ENCODE measurements at regions of chr11 and their contacts with region 1.

Region 1: DNA sequence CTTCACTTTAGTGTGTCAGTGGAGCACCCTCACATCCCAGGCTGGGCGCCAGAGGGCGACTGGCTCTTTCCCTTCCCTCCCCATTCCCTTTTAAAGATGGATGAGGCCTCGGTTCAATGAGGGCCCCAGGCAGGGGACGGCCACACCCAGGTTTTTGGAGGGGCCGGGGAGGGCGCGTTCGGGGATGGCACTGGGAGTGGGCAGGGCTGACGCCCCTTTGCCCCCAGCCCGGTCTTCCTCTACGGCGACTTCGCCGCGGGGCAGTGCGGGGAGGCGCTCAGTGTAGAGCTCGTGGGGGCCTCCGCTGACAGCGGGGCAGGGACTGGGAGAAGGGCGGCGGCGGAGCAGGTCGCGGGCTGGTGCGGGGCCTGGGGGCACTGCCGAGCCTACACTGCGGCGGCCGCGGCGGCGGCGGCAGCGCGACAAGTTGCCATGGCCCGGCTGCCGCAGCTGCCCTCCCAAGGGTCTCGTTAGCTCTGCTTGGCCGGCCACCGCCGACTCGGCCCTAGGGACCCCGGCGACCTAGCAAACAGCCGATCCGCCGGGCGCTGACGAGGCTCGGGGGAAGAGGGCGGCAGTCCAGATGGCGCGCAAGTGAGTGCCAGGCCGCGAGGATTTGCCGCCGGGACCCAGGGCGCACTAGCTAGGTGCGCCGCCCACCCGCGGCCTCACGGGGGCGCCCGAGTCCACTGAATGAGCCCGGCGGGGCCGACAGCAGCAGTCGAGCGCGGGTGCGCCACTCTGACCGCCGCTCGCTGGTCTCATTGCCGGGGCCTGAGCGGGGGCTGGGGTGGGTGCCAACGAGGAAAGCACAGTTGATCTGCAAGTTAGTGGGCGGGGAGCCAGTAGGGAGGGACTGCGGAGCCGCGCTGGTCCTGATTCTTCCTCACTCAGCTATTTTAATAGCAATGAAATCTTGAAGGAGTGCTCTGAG is 92.7 kb downstream of the RRM1 start:
- DNase-seq: peak; percentile 89
- H3K4me3 Mint-ChIP-seq: peak overlapping the region; percentile 77
- H3K27ac Mint-ChIP-seq: no peak overlapping the region
- H3K4me1 Mint-ChIP-seq: peaks cover 26% of the 10 kb centered on the region
- H3K27me3 Mint-ChIP-seq: peaks cover 6% of the 10 kb centered on the region

Region 2: DNA sequence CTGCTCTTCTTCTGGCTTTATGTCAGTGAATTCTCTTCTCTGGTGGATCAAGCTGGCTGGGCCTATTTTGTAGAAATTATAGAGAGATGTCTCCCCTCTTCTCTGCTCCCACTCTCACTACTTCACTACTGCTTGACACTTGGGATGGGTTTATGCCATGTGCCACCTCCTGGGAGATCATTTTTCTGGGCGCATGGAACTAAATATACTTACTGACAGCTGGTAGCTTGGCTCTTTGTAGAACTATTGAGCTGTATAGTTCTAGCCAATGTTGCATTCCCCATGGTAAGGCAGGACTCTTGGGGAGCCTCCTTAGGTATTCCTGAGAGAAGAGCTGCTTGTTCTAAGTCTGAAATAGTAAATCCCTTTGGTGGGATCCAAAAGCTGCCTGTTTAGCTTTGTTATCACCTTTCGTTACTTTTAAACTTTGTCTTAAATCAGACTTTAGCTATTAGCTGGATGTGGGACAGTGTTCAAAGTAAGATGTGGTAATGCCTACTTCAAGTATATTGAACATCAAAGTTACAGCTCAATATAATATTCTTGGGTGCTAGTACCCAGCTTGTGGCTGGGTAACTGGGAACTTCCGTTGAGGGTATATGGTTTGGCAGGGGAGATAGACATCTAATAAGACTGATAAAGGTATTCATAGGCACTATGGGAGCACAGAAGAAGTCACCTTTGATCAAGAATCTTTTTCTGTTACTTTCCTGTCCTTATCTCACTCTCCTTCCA is 180.2 kb before region 1 on chr11:
- CTCF ChIA-PET with region 1: no interaction called
- POLR2A ChIA-PET with region 1: no interaction called
- DNase-seq: no peak
- H3K4me3 Mint-ChIP-seq: no peak overlapping the region
- H3K27ac Mint-ChIP-seq: no peak overlapping the region
- H3K4me1 Mint-ChIP-seq: peaks cover 12% of the 10 kb centered on the region
- H3K27me3 Mint-ChIP-seq: no peaks in the 10 kb centered on the region

Region 3: GRCh38 chr11:4049006-4049405 is 138.3 kb before region 1 on chr11:
- CTCF ChIA-PET with region 1: no interaction called
- POLR2A ChIA-PET with region 1: no interaction called
- DNase-seq: no peak
- H3K4me3 Mint-ChIP-seq: no peak overlapping the region
- H3K27ac Mint-ChIP-seq: no peak overlapping the region
- H3K4me1 Mint-ChIP-seq: peaks cover 4% of the 10 kb centered on the region
- H3K27me3 Mint-ChIP-seq: no peaks in the 10 kb centered on the region

Region 4: GRCh38 chr11:4087551-4087950 is 99.8 kb before region 1 on chr11:
- CTCF ChIA-PET with region 1: no interaction called
- POLR2A ChIA-PET with region 1: no interaction called
- DNase-seq: no peak
- H3K4me3 Mint-ChIP-seq: no peak overlapping the region
- H3K27ac Mint-ChIP-seq: peak overlapping the region; percentile 64
- H3K4me1 Mint-ChIP-seq: peaks cover 64% of the 10 kb centered on the region
- H3K27me3 Mint-ChIP-seq: no peaks in the 10 kb centered on the region

Region 5: DNA sequence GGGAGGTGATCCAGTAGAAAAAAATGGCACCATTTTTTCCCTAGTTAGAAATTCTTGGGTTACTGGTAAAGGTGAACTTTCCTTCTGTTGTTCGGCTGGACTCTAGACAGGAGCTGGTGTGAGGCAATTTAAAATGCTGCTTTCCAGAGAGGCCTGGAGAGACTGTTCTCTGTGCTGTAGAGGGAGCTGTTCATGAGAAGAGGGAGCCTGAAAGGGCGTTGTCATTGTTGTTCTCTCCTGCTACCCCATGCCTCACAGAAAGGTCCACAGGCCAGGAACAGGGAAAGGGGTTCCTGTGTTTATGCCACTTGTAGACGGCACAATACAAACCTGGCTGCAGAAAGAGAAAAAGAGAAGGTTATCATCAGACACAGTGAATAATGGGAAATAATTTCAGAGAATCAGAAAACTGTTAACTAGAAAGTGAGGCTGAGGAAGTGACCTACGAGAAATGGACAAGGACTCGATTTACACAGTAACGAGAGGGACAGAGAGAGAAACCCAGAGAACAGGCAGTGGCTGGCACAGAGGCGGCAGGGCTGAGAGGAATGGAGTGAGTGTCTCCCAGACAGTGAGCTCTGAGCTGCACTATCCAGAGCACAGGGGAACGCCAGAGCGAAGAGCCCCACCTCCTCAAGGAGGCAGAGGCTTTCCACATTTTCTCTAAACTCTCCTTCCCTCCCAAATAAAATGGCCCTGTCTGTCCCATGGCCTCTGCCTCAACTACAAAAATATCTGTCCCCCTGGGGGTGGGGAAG is 16.5 kb after region 1 on chr11:
- CTCF ChIA-PET with region 1: interaction called, 19 read pairs
- POLR2A ChIA-PET with region 1: no interaction called
- DNase-seq: no peak
- H3K4me3 Mint-ChIP-seq: no peak overlapping the region
- H3K27ac Mint-ChIP-seq: no peak overlapping the region
- H3K4me1 Mint-ChIP-seq: no peaks in the 10 kb centered on the region
- H3K27me3 Mint-ChIP-seq: peaks cover 16% of the 10 kb centered on the region

Region 6: DNA sequence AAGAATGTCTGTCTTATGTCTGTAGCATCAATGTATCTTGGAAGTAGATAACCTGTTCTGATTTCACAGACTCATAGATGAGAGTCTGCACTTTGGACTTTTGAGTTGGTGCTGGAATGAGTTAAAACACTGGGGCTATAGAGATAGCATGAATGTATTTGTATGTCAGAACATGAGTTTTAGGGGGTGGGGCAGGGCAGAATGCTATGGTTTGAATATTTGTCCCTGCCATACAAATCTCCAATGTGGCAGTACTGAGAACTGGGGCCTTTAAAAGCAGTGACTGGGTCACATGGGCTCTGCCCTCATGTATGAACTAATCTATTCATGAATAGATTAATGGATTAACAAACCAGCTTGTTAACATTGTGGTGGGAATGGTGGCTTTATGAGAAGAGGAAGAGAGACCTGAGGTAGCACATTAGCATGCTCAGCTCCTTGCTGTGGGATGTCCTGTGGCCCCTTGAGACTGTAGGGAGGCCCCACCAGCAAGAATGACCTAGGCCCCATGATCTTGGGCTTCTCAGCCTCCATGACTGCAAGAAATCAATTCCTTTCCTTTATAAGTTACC is 279.6 kb after region 1 on chr11:
- CTCF ChIA-PET with region 1: no interaction called
- POLR2A ChIA-PET with region 1: no interaction called
- DNase-seq: no peak
- H3K4me3 Mint-ChIP-seq: no peak overlapping the region
- H3K27ac Mint-ChIP-seq: no peak overlapping the region
- H3K4me1 Mint-ChIP-seq: peaks cover 9% of the 10 kb centered on the region
- H3K27me3 Mint-ChIP-seq: peaks cover 14% of the 10 kb centered on the region

Region 7: GRCh38 chr11:4479644-4480308 is 292.5 kb after region 1 on chr11:
- CTCF ChIA-PET with region 1: interaction called, 11 read pairs
- POLR2A ChIA-PET with region 1: no interaction called
- DNase-seq: no peak
- H3K4me3 Mint-ChIP-seq: no peak overlapping the region
- H3K27ac Mint-ChIP-seq: no peak overlapping the region
- H3K4me1 Mint-ChIP-seq: peaks cover 8% of the 10 kb centered on the region
- H3K27me3 Mint-ChIP-seq: peaks cover 5% of the 10 kb centered on the region

Region 8: DNA sequence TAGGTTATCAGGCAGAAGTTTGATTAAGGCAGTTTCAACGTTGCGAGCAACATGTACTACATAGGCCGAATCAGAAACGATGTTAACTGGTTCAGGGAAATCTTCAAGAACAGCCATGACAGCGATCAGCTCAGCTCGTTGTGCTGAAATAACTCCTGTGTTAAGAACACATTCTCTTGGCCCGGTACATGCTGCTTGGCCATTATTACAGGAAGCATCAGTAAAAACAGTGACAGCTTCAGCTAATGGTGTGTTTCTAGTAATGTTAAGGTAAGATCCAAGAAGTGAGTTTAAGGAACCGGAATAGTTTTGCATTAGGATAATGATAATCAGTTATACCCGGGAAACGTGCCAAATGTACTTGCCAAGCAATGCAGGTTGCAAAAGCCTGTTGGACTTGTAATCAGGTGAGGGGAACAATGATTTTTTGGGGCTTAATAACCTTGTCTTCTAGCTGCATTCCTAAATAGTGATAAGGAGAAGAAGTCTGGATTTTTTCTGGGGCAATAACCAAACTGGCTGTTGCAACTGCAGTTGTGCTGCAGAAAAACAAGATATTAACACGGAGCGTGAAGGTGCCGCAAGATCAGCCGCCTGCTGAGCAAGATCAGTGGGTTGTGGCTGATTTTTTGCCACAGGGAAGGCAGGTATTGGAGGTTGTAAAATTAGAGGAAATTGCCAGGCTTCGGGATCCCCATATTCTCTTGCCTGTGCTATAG is 309.4 kb after region 1 on chr11:
- CTCF ChIA-PET with region 1: interaction called, 73 read pairs
- POLR2A ChIA-PET with region 1: no interaction called
- DNase-seq: no peak
- H3K4me3 Mint-ChIP-seq: no peak overlapping the region
- H3K27ac Mint-ChIP-seq: no peak overlapping the region
- H3K4me1 Mint-ChIP-seq: peaks cover 5% of the 10 kb centered on the region
- H3K27me3 Mint-ChIP-seq: peaks cover 26% of the 10 kb centered on the region

Region 9: DNA sequence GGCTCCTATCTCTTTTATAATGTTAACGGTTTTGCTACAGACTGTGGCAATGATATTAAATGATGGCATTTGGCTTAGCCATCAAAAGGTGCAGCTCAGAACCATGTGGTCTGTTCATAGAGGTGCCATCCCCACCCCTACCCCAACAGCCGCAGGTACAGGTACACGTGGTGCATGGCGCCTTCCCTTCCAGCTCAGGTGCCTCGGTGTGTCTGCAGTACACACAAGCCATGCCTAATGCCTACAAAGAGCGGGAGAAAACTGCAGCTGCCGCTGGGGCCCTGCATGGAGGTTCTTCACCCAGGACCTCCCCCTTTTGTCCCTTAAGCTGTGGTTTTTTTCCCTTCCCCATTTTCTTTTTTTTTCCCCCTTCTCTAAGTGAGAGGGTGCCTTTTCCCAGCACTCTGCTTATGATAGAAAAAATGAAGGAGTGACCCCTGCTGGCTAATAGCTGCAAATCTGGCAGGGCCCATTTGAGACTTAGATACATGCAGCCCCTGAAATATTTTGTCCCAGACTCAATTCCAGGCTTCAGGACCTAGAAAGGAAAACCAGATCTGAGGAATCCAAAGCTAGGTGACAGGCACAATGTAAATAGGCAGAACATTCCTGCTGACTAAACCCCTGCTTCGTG is 364.1 kb after region 1 on chr11:
- CTCF ChIA-PET with region 1: interaction called, 15 read pairs
- POLR2A ChIA-PET with region 1: no interaction called
- DNase-seq: no peak
- H3K4me3 Mint-ChIP-seq: no peak overlapping the region
- H3K27ac Mint-ChIP-seq: no peak overlapping the region
- H3K4me1 Mint-ChIP-seq: no peaks in the 10 kb centered on the region
- H3K27me3 Mint-ChIP-seq: peaks cover 3% of the 10 kb centered on the region